Activated CD4-positive, alpha-beta T cell treated with anti-CD3 and anti-CD28 coated beads, Interleukin-2, amount 10 ng/mL, durations not matched to agents 24 days and 14 days (primary cell): ENCODE measurements at regions of chr4 and their contacts with region 1.

Region 1: DNA sequence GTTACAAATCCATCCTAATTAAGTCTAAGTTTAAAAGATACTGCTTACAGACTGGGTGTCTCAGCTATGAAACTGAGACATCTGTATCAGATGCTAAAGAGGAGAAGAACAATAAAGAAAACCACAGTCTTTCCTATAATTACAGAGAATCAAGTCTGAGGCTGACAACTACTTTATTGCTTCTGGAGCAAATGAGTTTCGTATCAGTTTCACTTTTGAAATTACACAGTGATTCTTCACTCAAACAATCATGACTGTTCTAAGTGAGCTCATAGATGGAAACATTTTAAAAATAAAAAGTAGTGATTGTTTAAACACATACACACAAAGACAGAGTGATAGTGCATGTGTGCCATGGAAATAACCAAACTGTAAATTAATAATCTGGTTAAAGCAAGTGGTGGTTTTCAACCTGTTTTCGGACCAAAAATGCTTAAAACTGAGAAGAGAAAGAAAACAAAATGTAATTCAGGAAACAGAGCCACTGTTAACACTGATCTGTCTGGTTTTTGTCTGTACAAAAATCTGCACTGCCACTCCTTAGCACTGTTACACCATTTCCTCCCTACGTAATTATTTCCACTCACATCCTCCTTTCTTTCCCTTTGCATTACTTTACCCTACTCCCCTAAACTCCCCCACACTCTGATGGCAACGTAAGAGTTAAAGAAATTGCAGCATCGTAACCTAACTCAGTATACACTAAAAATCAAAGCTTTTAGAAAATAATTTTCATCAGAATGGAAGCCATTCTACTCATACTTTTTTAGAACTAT is 12.5 kb downstream of the RFC1 start:
- DNase-seq: peak; percentile 82
- H3K4me3 Mint-ChIP-seq: peak overlapping the region; percentile 78
- H3K27ac Mint-ChIP-seq: peak overlapping the region; percentile 92
- H3K4me1 Mint-ChIP-seq: peaks cover 53% of the 10 kb centered on the region
- H3K27me3 Mint-ChIP-seq: no peaks in the 10 kb centered on the region

Region 2: GRCh38 chr4:38889143-38889542 is 464.5 kb before region 1 on chr4:
- intact Hi-C with region 1: loop called (anchors 2 kb)
- DNase-seq: peak; percentile 68
- H3K4me3 Mint-ChIP-seq: peak overlapping the region; percentile 63
- H3K27ac Mint-ChIP-seq: peak overlapping the region; percentile 95
- H3K4me1 Mint-ChIP-seq: peaks cover 34% of the 10 kb centered on the region
- H3K27me3 Mint-ChIP-seq: no peaks in the 10 kb centered on the region

Region 3: GRCh38 chr4:39032218-39033085 is 321.2 kb before region 1 on chr4 and contains the start of gene TMEM156:
- intact Hi-C with region 1: loop called (anchors 5 kb)
- DNase-seq: peak; percentile 81
- H3K4me3 Mint-ChIP-seq: peak within 1 kb of the TSS; percentile 88
- H3K27ac Mint-ChIP-seq: peak within 1 kb of the TSS; percentile 89
- H3K4me1 Mint-ChIP-seq: peaks cover 37% of the 10 kb centered on the region
- H3K27me3 Mint-ChIP-seq: no peaks in the 10 kb centered on the region
- total RNA-seq, gene TMEM156: 25.9 and 26.9 TPM in 2 replicates

Region 4: GRCh38 chr4:39181905-39182638 is 171.6 kb before region 1 on chr4 and contains the start of gene WDR19:
- intact Hi-C with region 1: loop called (anchors 2 kb)
- DNase-seq: peak; percentile 100
- H3K4me3 Mint-ChIP-seq: no peak within 1 kb of the TSS
- H3K27ac Mint-ChIP-seq: no peak within 1 kb of the TSS
- H3K4me1 Mint-ChIP-seq: peaks cover 7% of the 10 kb centered on the region
- H3K27me3 Mint-ChIP-seq: peaks cover 6% of the 10 kb centered on the region
- total RNA-seq, gene WDR19: 12.1 and 15.6 TPM in 2 replicates

Region 5: GRCh38 chr4:39305912-39306677 is 47.6 kb before region 1 on chr4:
- intact Hi-C with region 1: no loop called
- DNase-seq: no peak
- H3K4me3 Mint-ChIP-seq: no peak overlapping the region
- H3K27ac Mint-ChIP-seq: peak overlapping the region; percentile 8
- H3K4me1 Mint-ChIP-seq: peaks cover 10% of the 10 kb centered on the region
- H3K27me3 Mint-ChIP-seq: no peaks in the 10 kb centered on the region

Region 6: GRCh38 chr4:39446751-39447573 is 93.3 kb after region 1 on chr4:
- intact Hi-C with region 1: no loop called
- DNase-seq: peak; percentile 78
- H3K4me3 Mint-ChIP-seq: peak overlapping the region; percentile 26
- H3K27ac Mint-ChIP-seq: no peak overlapping the region
- H3K4me1 Mint-ChIP-seq: peaks cover 8% of the 10 kb centered on the region
- H3K27me3 Mint-ChIP-seq: no peaks in the 10 kb centered on the region

Region 7: GRCh38 chr4:39458505-39459300 is 105.0 kb after region 1 on chr4 and contains the starts of genes LIAS and RPL9:
- intact Hi-C with region 1: loop called (anchors 2 kb)
- DNase-seq: peak; percentile 98
- H3K4me3 Mint-ChIP-seq: peak within 1 kb of the TSS; percentile 89
- H3K27ac Mint-ChIP-seq: peak within 1 kb of the TSS; percentile 98
- H3K4me1 Mint-ChIP-seq: peaks cover 35% of the 10 kb centered on the region
- H3K27me3 Mint-ChIP-seq: peaks cover 2% of the 10 kb centered on the region
- total RNA-seq, gene LIAS: 27.7 and 29.2 TPM in 2 replicates
- total RNA-seq, gene RPL9: 1,785 and 1,789 TPM in 2 replicates

Region 8: GRCh38 chr4:40199999-40200874 is 846.6 kb after region 1 on chr4:
- intact Hi-C with region 1: loop called (anchors 10 kb)
- DNase-seq: peak; percentile 93
- H3K4me3 Mint-ChIP-seq: peak overlapping the region; percentile 93
- H3K27ac Mint-ChIP-seq: peak overlapping the region; percentile 94
- H3K4me1 Mint-ChIP-seq: peaks cover 44% of the 10 kb centered on the region
- H3K27me3 Mint-ChIP-seq: no peaks in the 10 kb centered on the region